ENCODE measurements at regions of chr4 and their contacts with region 1.

Region 1: DNA sequence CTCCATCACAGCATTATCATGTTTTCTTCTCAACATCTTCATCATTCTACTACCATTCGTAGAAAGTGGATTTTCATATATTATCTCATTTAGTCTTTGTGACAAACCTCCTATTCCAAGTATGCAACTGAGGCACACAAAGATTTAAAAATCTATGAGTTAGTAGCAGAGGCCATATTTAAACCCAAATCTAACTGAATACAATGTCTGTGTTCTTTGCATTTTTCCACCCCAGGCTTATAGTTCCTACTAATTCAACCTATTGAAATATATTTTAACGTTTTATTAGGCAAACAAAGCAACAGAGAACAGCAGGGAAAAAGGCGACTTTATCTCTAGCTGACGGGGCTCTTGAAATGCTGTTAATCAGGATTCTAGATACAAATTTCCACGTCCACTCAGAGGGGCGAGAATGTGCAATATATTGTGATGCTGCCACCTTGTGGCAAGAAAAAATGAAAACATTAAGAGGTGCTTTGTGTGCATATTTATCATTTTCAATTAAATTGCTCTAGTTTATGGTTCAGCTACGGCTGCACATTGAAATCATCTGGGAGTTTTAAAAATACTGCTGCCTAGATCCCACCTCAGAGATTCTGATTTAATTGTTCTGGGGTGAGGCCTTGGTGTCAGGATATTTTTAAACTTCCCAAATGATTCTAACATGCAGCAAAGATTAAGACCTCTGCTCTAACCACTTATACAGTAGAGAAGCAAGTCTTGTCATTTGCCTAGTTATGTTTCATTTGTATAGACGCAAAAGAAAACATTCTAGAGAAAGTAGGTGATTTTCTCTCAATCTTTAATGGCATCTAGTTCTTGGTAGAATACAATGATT is 315.9 kb downstream of the MAPK10 start:
- DNase-seq: peak; percentile 20 to 61 (median 28)
- ATAC-seq: peak; percentile 84
- H3K4me3 ChIP-seq: no peak overlapping the region
- H3K27ac ChIP-seq: no peak overlapping the region
- H3K4me1 ChIP-seq: no peaks in the 10 kb centered on the region
- H3K27me3 ChIP-seq: 0 out of 5 replicates have a peak, but pooled peaks cover 0 to 6% of the 10 kb centered on the region in 2 experiments
- CTCF ChIP-seq: peak; percentile 39 to 70 (median 49); a peak in 4 of 6 replicates
- EP300 ChIP-seq: no peak
- POLR2A ChIP-seq: no peak
- RAD21 ChIP-seq: peak; percentile 64 to 80

Region 2: DNA sequence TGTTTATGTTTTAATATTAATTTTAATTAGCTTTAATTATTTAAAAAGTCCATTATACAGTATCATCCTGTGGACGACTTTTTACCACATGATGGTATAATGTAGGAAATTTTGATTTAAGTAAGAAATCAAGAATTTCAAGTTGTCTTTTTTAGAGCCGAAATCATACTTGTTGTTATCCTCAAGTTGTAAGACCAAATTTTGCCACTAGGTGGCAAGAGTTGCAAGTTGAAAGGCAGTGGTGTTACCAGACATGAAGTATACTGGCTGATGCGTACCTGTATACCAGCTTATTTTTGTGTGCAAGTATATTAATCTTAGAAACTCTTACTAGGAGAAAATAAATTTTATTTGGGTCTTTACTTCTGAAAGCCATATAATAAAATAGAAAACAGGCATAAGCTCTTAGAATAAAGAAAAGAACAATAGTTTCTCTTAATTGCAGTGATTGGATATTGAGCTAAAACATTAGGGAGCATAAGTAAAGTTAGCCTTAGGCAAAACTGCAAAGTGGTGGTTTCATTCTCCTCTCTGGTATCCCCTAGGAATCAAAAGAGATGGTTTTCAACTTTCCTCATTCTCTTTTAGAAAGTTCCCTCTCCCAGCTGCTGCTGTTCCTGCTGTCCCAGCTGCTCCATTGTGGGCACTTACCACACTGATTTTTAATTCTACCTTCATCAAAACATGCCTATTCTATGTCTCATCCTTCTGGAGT is 959.4 kb before region 1 on chr4:
- CTCF ChIA-PET with region 1: no interaction called
- POLR2A ChIA-PET with region 1: no interaction called
- in situ Hi-C with region 1: no loop called
- intact Hi-C with region 1: loop called (anchors 5 kb)
- DNase-seq: peak; percentile 12 to 69 (median 32)
- ATAC-seq: peak; percentile 76
- H3K4me3 ChIP-seq: no peak overlapping the region
- H3K27ac ChIP-seq: no peak overlapping the region
- H3K4me1 ChIP-seq: no peaks in the 10 kb centered on the region
- H3K27me3 ChIP-seq: no peaks in the 10 kb centered on the region
- CTCF ChIP-seq: peak; percentile 38 to 68 (median 55); a peak in 5 of 6 replicates
- EP300 ChIP-seq: no peak
- POLR2A ChIP-seq: no peak
- RAD21 ChIP-seq: peak; percentile 53 to 73

Region 3: GRCh38 chr4:85147439-85148076 is 896.4 kb before region 1 on chr4:
- CTCF ChIA-PET with region 1: interaction called, 3 read pairs
- POLR2A ChIA-PET with region 1: no interaction called
- in situ Hi-C with region 1: loop called (anchors 25 kb)
- intact Hi-C with region 1: loop called (anchors 5 kb)
- DNase-seq: peak; percentile 18 to 62 (median 26)
- ATAC-seq: peak; percentile 89
- H3K4me3 ChIP-seq: no peak overlapping the region
- H3K27ac ChIP-seq: no peak overlapping the region
- H3K4me1 ChIP-seq: no peaks in the 10 kb centered on the region
- H3K27me3 ChIP-seq: no peaks in the 10 kb centered on the region
- CTCF ChIP-seq: peak; percentile 38 to 65 (median 63); a peak in 5 of 6 replicates
- EP300 ChIP-seq: no peak
- POLR2A ChIP-seq: no peak
- RAD21 ChIP-seq: peak; percentile 63 to 73

Region 4: DNA sequence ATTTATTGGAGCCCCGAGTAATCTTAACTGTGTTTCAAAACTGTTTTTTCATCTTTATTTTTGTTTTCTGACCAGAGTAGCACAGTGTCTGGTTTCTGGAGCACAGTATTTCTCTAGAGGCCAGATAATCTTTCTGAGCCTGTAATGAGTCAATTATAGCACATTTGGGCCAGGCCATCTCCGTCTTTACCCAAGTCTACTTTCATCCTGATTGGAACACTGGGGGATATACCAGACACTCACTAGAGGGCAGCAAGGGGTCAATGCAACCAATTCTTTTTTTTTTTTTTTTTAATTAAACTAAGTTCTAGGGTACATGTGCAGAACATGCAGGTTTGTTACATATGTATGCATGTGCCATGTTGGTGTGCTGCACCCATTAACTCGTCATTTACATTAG is 287.0 kb before region 1 on chr4:
- CTCF ChIA-PET with region 1: no interaction called
- POLR2A ChIA-PET with region 1: no interaction called
- in situ Hi-C with region 1: no loop called
- intact Hi-C with region 1: loop called (anchors 10 kb)
- DNase-seq: peak; percentile 8 to 25 (median 10)
- ATAC-seq: peak; percentile 66; the same call in 2 of the 3 replicates
- H3K4me3 ChIP-seq: no peak overlapping the region
- H3K27ac ChIP-seq: no peak overlapping the region
- H3K4me1 ChIP-seq: no peaks in the 10 kb centered on the region
- H3K27me3 ChIP-seq: no peaks in the 10 kb centered on the region
- CTCF ChIP-seq: peak in 2 of 3 experiments; percentile 41 to 50; a peak in 3 of 6 replicates
- EP300 ChIP-seq: no peak
- POLR2A ChIP-seq: no peak
- RAD21 ChIP-seq: peak in 1 of 2 experiments; percentile 32; a peak in 2 of 4 replicates

Region 5: GRCh38 chr4:85798012-85798770 is 245.8 kb before region 1 on chr4:
- CTCF ChIA-PET with region 1: no interaction called
- POLR2A ChIA-PET with region 1: no interaction called
- in situ Hi-C with region 1: no loop called
- intact Hi-C with region 1: loop called (anchors 1 kb)
- DNase-seq: no peak
- ATAC-seq: no peak
- H3K4me3 ChIP-seq: no peak overlapping the region
- H3K27ac ChIP-seq: no peak overlapping the region
- H3K4me1 ChIP-seq: no peaks in the 10 kb centered on the region
- H3K27me3 ChIP-seq: no peaks in the 10 kb centered on the region
- CTCF ChIP-seq: no peak
- EP300 ChIP-seq: no peak
- POLR2A ChIP-seq: no peak
- RAD21 ChIP-seq: no peak

Region 6: GRCh38 chr4:86223472-86223871 is 179.5 kb after region 1 on chr4:
- CTCF ChIA-PET with region 1: no interaction called
- POLR2A ChIA-PET with region 1: no interaction called
- in situ Hi-C with region 1: no loop called
- intact Hi-C with region 1: loop called (anchors 10 kb)
- DNase-seq: peak; percentile 24 to 62 (median 33)
- ATAC-seq: peak; percentile 95
- H3K4me3 ChIP-seq: no peak overlapping the region
- H3K27ac ChIP-seq: no peak overlapping the region
- H3K4me1 ChIP-seq: no peaks in the 10 kb centered on the region
- H3K27me3 ChIP-seq: no peaks in the 10 kb centered on the region
- CTCF ChIP-seq: peak; percentile 69 to 94 (median 80)
- EP300 ChIP-seq: no peak
- POLR2A ChIP-seq: no peak
- RAD21 ChIP-seq: peak in 1 of 2 experiments; percentile 59; a peak in 2 of 4 replicates